A673 (cell line): ENCODE measurements at regions of chr21 and their contacts with region 1.

Region 1: GRCh38 chr21:36028127-36029069 is 31.9 kb downstream of the SETD4 start:
- DNase-seq: peak; percentile 77
- H3K4me3 ChIP-seq: no peak overlapping the region
- H3K27ac ChIP-seq: no peak overlapping the region
- H3K4me1 ChIP-seq: no peaks in the 10 kb centered on the region
- H3K27me3 ChIP-seq: no peaks in the 10 kb centered on the region
- CTCF ChIP-seq: peak; percentile 95

Region 2: GRCh38 chr21:34693192-34693810 is 1335.1 kb before region 1 on chr21:
- CTCF ChIA-PET with region 1: no interaction called
- POLR2A ChIA-PET with region 1: no interaction called
- intact Hi-C with region 1: loop called (anchors 5 kb)
- DNase-seq: peak; percentile 76
- H3K4me3 ChIP-seq: no peak overlapping the region
- H3K27ac ChIP-seq: no peak overlapping the region
- H3K4me1 ChIP-seq: no peaks in the 10 kb centered on the region
- H3K27me3 ChIP-seq: peaks cover 12% of the 10 kb centered on the region
- CTCF ChIP-seq: peak; percentile 83

Region 3: GRCh38 chr21:35697321-35697808 is 331.0 kb before region 1 on chr21:
- CTCF ChIA-PET with region 1: no interaction called
- POLR2A ChIA-PET with region 1: no interaction called
- intact Hi-C with region 1: no loop called
- DNase-seq: no peak
- H3K4me3 ChIP-seq: no peak overlapping the region
- H3K27ac ChIP-seq: no peak overlapping the region
- H3K4me1 ChIP-seq: no peaks in the 10 kb centered on the region
- H3K27me3 ChIP-seq: peaks cover 42% of the 10 kb centered on the region
- CTCF ChIP-seq: no peak

Region 4: DNA sequence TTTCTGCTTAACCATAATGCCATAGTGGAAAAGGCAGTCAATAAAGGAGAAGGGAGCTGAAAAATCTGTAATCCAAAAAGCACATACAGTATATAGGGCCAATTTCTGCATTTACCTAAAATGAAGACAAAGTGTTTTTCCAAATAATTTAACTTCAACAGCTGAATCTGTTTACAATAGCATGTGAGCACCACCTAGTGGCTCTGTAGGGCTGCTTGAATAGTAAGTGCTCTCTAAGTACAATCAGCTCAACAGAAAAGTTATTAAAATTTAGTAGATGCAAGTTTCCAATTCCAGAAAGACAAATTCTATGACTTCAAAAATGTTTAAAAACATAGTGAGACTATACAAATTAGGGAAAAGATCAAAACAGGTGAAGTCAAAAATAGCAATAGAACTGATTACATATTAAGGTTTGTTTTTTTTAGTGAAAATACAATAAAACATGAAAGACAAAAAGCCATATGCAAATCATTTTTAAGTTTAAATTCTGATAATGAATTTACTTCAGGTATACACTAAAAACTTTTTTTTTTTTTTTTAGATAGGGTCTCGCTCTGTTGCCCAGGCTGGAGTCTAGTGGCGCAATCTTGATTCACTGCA is 188.1 kb before region 1 on chr21:
- CTCF ChIA-PET with region 1: no interaction called
- POLR2A ChIA-PET with region 1: no interaction called
- intact Hi-C with region 1: loop called (anchors 2 kb)
- DNase-seq: peak; percentile 72
- H3K4me3 ChIP-seq: no peak overlapping the region
- H3K27ac ChIP-seq: no peak overlapping the region
- H3K4me1 ChIP-seq: no peaks in the 10 kb centered on the region
- H3K27me3 ChIP-seq: peaks cover 8% of the 10 kb centered on the region
- CTCF ChIP-seq: peak; percentile 90

Region 5: DNA sequence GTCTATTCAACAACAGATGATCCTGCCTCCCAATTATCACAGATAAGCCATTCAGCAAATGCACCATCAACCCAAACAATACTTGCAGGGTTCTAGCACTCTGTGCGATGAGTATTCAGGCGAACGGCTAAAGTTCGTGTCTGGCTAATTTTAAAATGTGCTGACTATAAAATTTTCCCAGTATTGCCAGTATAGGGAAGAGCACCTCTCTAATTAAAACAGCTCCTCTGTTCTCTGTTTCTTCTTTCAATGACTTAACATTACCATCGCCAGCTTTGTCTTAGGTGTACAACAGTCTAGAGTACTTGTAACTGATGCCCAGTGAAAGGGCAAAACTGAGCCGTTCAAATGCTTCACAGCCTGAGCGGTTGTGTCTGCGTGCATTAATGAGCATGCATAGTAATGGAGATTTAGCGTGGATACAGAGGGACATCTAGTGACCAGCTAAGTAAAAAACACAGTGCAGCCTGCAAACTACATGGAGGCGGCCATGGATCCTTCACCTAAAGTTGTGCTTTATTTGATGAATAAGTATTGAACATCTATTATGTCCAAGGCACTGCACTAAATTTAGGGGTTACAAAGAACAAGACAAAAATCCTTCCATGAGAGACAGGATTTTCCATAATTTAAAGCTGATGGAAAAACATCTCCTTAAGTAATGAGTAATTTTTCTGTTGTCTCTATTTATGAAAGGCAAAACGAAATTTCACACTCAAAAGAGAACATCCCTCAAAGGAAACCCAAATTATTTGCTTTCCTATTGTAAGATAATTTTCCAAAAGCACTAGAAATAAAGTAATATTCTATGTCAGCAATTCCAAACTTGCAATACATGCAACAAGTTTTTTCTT is 88.1 kb before region 1 on chr21:
- CTCF ChIA-PET with region 1: no interaction called
- POLR2A ChIA-PET with region 1: no interaction called
- intact Hi-C with region 1: loop called (anchors 5 kb)
- DNase-seq: peak; percentile 81
- H3K4me3 ChIP-seq: no peak overlapping the region
- H3K27ac ChIP-seq: no peak overlapping the region
- H3K4me1 ChIP-seq: no peaks in the 10 kb centered on the region
- H3K27me3 ChIP-seq: no peaks in the 10 kb centered on the region
- CTCF ChIP-seq: peak; percentile 77

Region 6: GRCh38 chr21:36113647-36114428 is 85.4 kb after region 1 on chr21:
- CTCF ChIA-PET with region 1: no interaction called
- POLR2A ChIA-PET with region 1: no interaction called
- intact Hi-C with region 1: loop called (anchors 5 kb)
- DNase-seq: no peak
- H3K4me3 ChIP-seq: no peak overlapping the region
- H3K27ac ChIP-seq: peak overlapping the region; percentile 5
- H3K4me1 ChIP-seq: peaks cover 3% of the 10 kb centered on the region
- H3K27me3 ChIP-seq: no peaks in the 10 kb centered on the region
- CTCF ChIP-seq: no peak

Region 7: DNA sequence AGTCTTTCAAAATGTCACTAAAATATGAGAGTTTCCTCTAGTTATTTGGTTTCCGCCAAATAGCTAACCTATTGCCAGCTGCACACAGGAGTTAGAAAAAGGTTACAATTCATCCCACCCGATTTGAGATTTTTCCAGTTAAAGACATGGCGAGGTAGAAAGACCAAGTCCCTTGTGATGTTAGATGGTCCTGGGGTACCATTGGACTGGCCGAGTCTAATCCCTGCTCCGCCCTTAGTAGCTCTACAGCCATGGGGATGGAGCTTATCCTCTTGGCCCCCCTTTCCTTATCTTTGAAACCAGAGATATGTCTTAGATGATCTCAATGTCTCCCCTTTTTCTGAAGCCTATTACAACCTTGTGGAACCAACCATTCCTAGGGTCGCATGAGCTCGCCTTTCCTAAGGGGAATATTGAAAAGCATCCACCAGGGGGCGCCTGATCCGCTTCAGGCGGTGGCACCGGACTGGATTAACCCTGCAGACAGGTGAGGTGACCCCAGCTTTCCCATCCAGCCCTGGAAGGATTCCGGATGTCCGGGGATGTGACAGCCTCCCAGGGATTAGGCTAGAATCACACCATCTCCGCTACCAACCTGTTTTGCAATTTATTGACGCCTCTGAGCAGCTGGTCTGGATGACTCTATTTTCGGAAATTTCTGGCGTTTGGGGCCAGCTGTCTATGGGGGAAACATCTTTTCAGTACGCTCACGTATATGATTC is 602.2 kb after region 1 on chr21:
- CTCF ChIA-PET with region 1: no interaction called
- POLR2A ChIA-PET with region 1: no interaction called
- intact Hi-C with region 1: no loop called
- DNase-seq: peak; percentile 66
- H3K4me3 ChIP-seq: no peak overlapping the region
- H3K27ac ChIP-seq: no peak overlapping the region
- H3K4me1 ChIP-seq: no peaks in the 10 kb centered on the region
- H3K27me3 ChIP-seq: no peaks in the 10 kb centered on the region
- CTCF ChIP-seq: peak; percentile 90